CD8-positive, alpha-beta T cell (primary cell): ENCODE measurements at regions of chr19 and their contacts with region 1.

Region 1: GRCh38 chr19:4400135-4400936 is at the start of gene SH3GL1:
- DNase-seq: peak; percentile 80 to 97 (median 94)
- ATAC-seq: peak; percentile 66
- H3K4me3 ChIP-seq: peak within 1 kb of the TSS; percentile 83 to 92
- H3K4me3 Mint-ChIP-seq: peak within 1 kb of the TSS; percentile 91
- H3K27ac ChIP-seq: peak within 1 kb of the TSS; percentile 77 to 97
- H3K27ac Mint-ChIP-seq: peak within 1 kb of the TSS; percentile 98
- H3K4me1 ChIP-seq: peaks cover 44% of the 10 kb centered on the region
- H3K4me1 Mint-ChIP-seq: peaks cover 55% of the 10 kb centered on the region
- H3K27me3 ChIP-seq: no peaks in the 10 kb centered on the region
- H3K27me3 Mint-ChIP-seq: no peaks in the 10 kb centered on the region
- CTCF ChIP-seq: peak; percentile 71
- total RNA-seq, gene SH3GL1: 35.0 to 38.1 TPM

Region 2: GRCh38 chr19:3360421-3361383 is 1039.6 kb before region 1 on chr19:
- CTCF ChIA-PET with region 1: no interaction called
- POLR2A ChIA-PET with region 1: no interaction called
- intact Hi-C with region 1: loop called in 1 of 2 experiments (anchors 10 kb)
- DNase-seq: peak; percentile 35 to 90 (median 74)
- ATAC-seq: peak; percentile 55
- H3K4me3 ChIP-seq: peak overlapping the region; percentile 66 to 69
- H3K4me3 Mint-ChIP-seq: peak overlapping the region; percentile 90
- H3K27ac ChIP-seq: peak overlapping the region; percentile 38 to 63
- H3K27ac Mint-ChIP-seq: peak overlapping the region; percentile 91
- H3K4me1 ChIP-seq: peaks cover 31% of the 10 kb centered on the region
- H3K4me1 Mint-ChIP-seq: peaks cover 57% of the 10 kb centered on the region
- H3K27me3 ChIP-seq: no peaks in the 10 kb centered on the region
- H3K27me3 Mint-ChIP-seq: no peaks in the 10 kb centered on the region
- CTCF ChIP-seq: no peak

Region 3: DNA sequence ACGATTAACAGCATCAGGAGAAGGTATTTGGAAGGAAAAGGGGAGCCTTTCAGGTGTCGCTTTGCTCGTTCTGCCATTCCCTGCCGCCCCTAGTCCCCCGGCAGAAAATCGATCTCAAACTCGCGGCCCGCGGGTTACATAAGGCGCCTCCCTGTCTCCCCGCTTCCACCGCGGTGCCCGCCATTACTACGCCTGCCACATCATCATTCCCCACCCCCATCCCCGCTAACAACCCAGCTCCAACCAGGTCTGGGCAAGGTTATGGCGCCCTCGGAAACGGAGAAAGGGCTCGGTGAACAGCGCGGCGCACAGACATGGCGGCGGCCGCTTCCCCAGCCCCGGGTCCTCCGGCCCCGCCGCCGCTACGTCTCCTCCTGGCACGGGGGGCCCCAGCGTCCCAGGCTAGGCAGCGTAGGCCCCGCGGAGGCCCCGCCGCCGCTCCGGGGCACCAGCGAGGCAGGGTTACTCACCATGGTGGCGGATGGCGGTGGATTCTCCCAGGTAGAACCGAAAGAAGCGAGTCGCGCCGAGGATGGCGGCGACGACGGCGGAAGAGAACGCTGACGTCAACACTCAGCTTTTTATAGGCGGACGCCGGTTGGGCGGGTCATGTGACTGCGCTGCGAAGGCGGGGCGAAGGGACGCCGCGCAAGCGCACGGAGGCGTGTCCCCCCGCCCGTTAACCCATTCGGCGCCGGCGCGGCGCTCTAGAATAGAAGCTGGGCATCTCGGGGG is 415.3 kb before region 1 on chr19 and contains the start of gene EEF2:
- CTCF ChIA-PET with region 1: no interaction called
- POLR2A ChIA-PET with region 1: no interaction called
- intact Hi-C with region 1: loop called in 1 of 2 experiments (anchors 5 kb)
- DNase-seq: peak; percentile 82 to 96 (median 90)
- ATAC-seq: peak; percentile 54
- H3K4me3 ChIP-seq: peak within 1 kb of the TSS; percentile 70 to 78
- H3K4me3 Mint-ChIP-seq: peak within 1 kb of the TSS; percentile 92
- H3K27ac ChIP-seq: peak within 1 kb of the TSS; percentile 83 to 85
- H3K27ac Mint-ChIP-seq: peak within 1 kb of the TSS; percentile 97
- H3K4me1 ChIP-seq: peaks cover 52% of the 10 kb centered on the region
- H3K4me1 Mint-ChIP-seq: peaks cover 57% of the 10 kb centered on the region
- H3K27me3 ChIP-seq: no peaks in the 10 kb centered on the region
- H3K27me3 Mint-ChIP-seq: no peaks in the 10 kb centered on the region
- CTCF ChIP-seq: no peak
- total RNA-seq, gene EEF2: 2,844 to 2,933 TPM

Region 4: DNA sequence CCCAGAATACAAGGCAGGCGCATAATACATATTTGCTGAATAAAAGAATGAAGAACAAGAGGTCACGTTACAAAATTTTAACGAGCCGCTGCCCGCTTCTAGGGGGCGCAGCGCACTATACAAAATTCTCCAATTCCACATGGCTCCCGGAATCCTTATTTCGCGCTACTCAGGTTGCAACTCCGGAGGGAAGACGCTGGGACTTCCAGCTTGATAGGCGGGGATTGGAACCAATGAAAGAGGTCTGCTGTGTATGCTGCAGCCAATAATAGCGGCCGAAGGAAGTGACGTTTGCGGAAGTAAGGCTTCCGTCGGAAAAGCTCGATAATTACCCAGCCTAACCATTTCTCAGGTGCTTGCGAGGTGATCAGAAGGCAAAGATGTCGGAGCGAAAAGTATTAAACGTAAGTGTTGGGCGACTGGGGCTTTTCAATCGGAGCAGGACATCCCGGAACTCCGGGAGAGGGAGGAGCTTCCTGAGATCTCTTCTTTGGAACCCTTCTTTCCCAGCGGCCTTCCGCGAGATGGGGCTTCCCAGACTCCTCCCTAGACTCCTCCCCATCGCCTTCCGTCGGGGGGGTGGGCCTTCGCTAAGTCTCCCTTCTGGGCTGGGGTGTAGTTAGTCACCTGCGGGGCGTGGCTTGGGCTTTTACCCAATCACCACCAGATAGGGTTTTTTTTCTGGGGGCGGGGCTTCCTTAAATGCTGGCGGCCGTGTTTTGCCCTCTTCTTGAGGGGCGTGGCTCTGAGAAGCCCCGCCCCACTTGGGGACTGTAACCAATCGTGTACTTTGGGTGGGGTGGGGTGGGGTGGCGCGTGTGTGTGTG is 153.4 kb before region 1 on chr19 and contains the start of gene YJU2:
- CTCF ChIA-PET with region 1: interaction called, 8 read pairs
- POLR2A ChIA-PET with region 1: interaction called, 5 read pairs
- intact Hi-C with region 1: loop called (anchors 1 kb)
- DNase-seq: peak; percentile 91 to 100 (median 98)
- ATAC-seq: peak; percentile 95
- H3K4me3 ChIP-seq: peak within 1 kb of the TSS; percentile 82 to 87
- H3K4me3 Mint-ChIP-seq: peak within 1 kb of the TSS; percentile 93
- H3K27ac ChIP-seq: peak within 1 kb of the TSS; percentile 96 to 100
- H3K27ac Mint-ChIP-seq: peak within 1 kb of the TSS; percentile 99
- H3K4me1 ChIP-seq: peaks cover 19% of the 10 kb centered on the region
- H3K4me1 Mint-ChIP-seq: peaks cover 22% of the 10 kb centered on the region
- H3K27me3 ChIP-seq: no peaks in the 10 kb centered on the region
- H3K27me3 Mint-ChIP-seq: peaks cover 2% of the 10 kb centered on the region
- CTCF ChIP-seq: peak; percentile 68
- total RNA-seq, gene YJU2: 53.9 to 61.6 TPM

Region 5: GRCh38 chr19:4352701-4353121 is 47.6 kb before region 1 on chr19:
- CTCF ChIA-PET with region 1: interaction called, 10 read pairs
- POLR2A ChIA-PET with region 1: interaction called, 4 read pairs
- intact Hi-C with region 1: no loop called
- DNase-seq: peak in 8 of 9 experiments; percentile 41 to 83 (median 69)
- ATAC-seq: peak; percentile 96
- H3K4me3 ChIP-seq: no peak overlapping the region
- H3K4me3 Mint-ChIP-seq: no peak overlapping the region
- H3K27ac ChIP-seq: no peak overlapping the region
- H3K27ac Mint-ChIP-seq: no peak overlapping the region
- H3K4me1 ChIP-seq: no peaks in the 10 kb centered on the region
- H3K4me1 Mint-ChIP-seq: peaks cover 2% of the 10 kb centered on the region
- H3K27me3 ChIP-seq: no peaks in the 10 kb centered on the region
- H3K27me3 Mint-ChIP-seq: no peaks in the 10 kb centered on the region
- CTCF ChIP-seq: peak; percentile 87

Region 6: DNA sequence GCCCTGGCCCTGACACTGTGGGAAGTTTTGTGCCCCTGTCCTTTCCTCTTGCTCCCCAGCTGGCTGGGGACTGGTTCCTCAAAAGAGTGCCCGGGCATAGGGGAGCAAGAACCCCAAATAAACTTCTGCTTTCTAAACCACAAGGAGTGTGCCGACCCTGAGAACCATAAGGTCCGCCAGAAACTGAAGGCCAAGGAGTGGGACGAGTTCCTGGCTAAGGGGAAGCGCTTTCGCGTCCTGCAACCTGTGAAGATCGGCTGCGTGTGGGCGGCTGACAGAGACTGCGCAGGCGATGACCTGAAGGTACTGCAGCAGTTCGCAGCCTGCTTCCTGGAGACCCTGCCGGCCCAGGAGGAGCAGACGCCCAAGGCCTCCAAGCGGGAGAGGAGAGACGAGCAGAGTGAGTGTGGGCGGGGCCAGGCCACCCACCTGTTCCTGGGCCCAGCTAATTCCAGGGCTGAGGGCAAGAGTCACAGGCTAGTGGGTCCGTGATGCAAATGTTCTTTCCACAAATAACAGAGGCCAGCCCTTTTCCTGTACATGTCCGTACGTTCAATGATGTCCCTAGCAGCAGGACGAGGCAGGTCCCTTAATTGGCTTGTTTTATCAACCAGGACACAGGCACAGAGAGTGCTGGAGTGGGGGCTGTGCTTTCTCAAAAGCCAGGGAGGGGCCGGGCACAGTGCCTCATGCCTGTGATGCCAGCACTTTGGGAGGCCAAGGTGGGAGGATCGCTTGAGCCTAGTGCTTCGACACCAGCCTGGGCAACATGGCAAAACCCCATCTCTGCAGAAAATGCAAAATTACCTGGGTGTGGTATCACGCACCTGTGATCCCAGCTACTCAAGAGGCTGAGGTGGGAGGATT is 31.7 kb after region 1 on chr19:
- CTCF ChIA-PET with region 1: no interaction called
- POLR2A ChIA-PET with region 1: no interaction called
- intact Hi-C with region 1: no loop called
- DNase-seq: no peak
- ATAC-seq: peak; percentile 17
- H3K4me3 ChIP-seq: no peak overlapping the region
- H3K4me3 Mint-ChIP-seq: no peak overlapping the region
- H3K27ac ChIP-seq: no peak overlapping the region
- H3K27ac Mint-ChIP-seq: no peak overlapping the region
- H3K4me1 ChIP-seq: no peaks in the 10 kb centered on the region
- H3K4me1 Mint-ChIP-seq: no peaks in the 10 kb centered on the region
- H3K27me3 ChIP-seq: no peaks in the 10 kb centered on the region
- H3K27me3 Mint-ChIP-seq: no peaks in the 10 kb centered on the region
- CTCF ChIP-seq: no peak

Region 7: DNA sequence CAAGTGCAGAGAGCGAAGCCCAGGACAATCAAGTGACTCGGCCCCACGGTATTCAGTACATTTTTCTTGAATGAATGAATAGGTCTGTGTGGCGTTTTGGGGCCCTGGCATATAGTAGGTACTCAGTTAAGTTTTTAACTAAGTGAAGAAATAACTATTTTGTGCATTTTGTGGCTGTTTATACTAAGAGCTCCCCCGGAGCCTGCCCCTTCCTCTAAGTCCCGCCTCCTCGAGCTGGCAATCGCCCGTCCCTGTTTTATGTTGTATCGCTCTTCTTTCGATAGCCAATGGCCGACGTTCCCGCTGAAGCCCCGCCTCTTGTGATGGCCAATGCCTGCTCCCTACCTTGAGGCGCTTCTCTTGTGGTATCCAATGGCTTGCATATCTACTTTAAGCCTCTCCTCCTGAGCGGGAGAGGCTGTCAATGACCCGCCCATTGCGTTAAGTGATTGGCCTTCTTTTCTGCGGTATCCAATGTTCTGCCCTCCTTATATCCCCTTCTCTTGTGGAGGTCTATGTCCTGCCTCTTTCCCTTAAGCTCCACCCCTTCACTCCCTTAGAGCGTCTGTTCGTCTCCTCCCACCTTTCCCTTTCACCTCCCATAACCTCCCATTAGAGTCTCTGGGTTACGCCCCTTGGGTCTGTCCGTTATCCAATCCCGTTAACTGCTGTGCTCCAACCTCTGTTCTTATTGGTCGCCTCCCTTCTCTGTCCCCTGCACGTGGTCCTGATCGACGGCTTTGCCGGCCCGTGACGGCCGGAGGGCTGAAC is 71.3 kb after region 1 on chr19:
- CTCF ChIA-PET with region 1: interaction called, 3 read pairs
- POLR2A ChIA-PET with region 1: interaction called, 12 read pairs
- intact Hi-C with region 1: loop called (anchors 1 kb)
- DNase-seq: peak; percentile 94 to 100 (median 97)
- ATAC-seq: peak; percentile 85
- H3K4me3 ChIP-seq: peak overlapping the region; percentile 55 to 63
- H3K4me3 Mint-ChIP-seq: no peak overlapping the region
- H3K27ac ChIP-seq: peak overlapping the region; percentile 70 to 72
- H3K27ac Mint-ChIP-seq: no peak overlapping the region
- H3K4me1 ChIP-seq: peaks cover 20% of the 10 kb centered on the region
- H3K4me1 Mint-ChIP-seq: peaks cover 22% of the 10 kb centered on the region
- H3K27me3 ChIP-seq: no peaks in the 10 kb centered on the region
- H3K27me3 Mint-ChIP-seq: no peaks in the 10 kb centered on the region
- CTCF ChIP-seq: no peak

Region 8: GRCh38 chr19:5827891-5828660 is 1427.7 kb after region 1 on chr19:
- CTCF ChIA-PET with region 1: no interaction called
- POLR2A ChIA-PET with region 1: no interaction called
- intact Hi-C with region 1: loop called in 1 of 2 experiments (anchors 5 kb)
- DNase-seq: peak; percentile 82 to 98 (median 90)
- ATAC-seq: peak; percentile 82
- H3K4me3 ChIP-seq: peak overlapping the region; percentile 56 to 70
- H3K4me3 Mint-ChIP-seq: peak overlapping the region; percentile 97
- H3K27ac ChIP-seq: peak overlapping the region; percentile 62 to 70
- H3K27ac Mint-ChIP-seq: peak overlapping the region; percentile 98
- H3K4me1 ChIP-seq: peaks cover 23% of the 10 kb centered on the region
- H3K4me1 Mint-ChIP-seq: peaks cover 15% of the 10 kb centered on the region
- H3K27me3 ChIP-seq: peaks cover 0 to 4% of the 10 kb centered on the region in 2 experiments
- H3K27me3 Mint-ChIP-seq: peaks cover 2% of the 10 kb centered on the region
- CTCF ChIP-seq: no peak